Posterior cingulate gyrus (tissue), 11 donors: ENCODE measurements at regions of chr10 and their contacts with region 1.

Region 1: DNA sequence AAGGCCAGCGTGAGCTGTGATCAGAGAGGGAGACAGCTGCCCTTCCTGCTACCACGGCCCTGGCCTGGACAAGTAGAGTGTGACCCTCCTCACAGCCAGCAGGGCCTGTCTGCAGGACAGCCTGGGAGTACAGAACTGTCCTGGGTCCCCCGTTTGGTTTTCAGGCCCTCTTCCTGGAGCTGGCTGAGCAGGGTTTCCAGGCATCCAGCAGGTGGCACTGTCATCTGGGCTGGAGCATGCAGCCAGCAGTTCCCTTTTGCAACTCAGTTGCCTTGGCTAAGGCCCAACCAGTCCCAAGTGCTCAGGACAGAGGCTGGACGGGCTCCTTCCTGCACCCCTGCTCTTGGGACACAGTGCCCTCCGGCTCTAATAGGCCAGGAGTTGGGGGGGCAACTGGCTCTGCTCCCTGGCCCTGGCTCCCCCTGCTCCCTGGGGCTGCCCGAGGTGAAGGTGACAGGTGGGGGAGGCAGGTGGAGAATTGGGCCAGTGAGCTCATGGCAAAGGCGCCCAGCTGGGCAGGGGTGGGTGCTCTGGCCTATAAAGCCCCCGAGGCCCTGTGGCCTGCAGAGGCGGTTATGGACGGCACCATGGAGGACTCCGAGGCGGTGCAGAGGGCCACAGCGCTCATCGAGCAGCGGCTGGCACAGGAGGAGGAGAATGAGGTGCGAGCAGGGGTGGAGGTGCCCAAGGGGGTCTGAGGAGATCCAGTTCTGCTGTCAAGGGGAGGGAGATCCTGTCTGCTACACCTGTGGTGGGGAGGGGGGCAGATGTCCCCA is at the start of gene ANKRD2:
- DNase-seq: peak; percentile 61 to 96 (median 81)

Region 2: DNA sequence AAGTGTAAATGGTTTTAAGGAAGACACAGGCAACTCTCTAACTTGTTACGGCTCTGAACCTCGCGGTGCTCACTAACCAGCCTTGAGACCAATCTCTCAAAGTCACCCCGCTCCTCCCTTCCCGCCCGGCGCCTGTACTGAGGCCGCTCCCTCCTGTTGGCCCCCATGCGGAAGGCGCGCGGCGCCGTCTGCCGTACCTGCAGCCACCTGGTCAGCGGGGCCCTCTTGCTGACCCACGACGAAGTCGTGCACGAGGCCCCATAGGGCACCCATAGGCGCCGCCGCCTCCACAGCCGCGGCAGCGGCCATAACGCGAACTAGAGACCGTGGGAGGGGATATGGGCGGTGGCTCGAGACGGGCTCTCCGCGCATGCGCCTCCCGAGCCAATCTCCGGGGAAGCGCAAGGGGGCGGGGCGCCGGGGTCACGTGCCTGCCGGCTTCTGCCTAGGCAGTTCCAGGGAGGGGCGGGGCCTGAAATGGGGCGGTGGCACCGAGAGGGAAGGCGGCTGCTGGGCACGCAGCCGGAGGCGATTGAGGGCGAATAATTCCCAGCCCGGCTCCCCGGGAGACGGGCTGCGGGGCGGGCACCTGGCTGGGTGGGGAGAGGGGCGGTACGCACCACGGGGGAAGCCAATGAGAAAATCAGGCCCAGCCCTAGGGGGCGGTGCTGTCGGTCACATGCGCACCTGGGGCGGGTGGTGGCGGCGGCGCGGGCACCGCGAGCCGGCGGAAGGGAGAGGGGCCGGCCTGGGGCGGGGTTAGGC is 74.1 kb before region 1 on chr10 and contains the start of gene MMS19:
- intact Hi-C with region 1: no loop called
- DNase-seq: peak; percentile 97 to 100 (median 98)

Region 3: GRCh38 chr10:97612386-97612785 is 40.0 kb after region 1 on chr10:
- intact Hi-C with region 1: loop called (anchors 5 kb)
- DNase-seq: no peak

Region 4: GRCh38 chr10:97736902-97737769 is 164.7 kb after region 1 on chr10 and contains the start of gene ZFYVE27:
- intact Hi-C with region 1: loop called (anchors 5 kb)
- DNase-seq: peak; percentile 90 to 99 (median 94)